ENCODE measurements at regions of chr17 and their contacts with region 1.

Region 1: GRCh38 chr17:35127751-35128514 is 6.5 kb downstream of the FNDC8 start:
- DNase-seq: no peak
- ATAC-seq: no peak
- H3K4me3 ChIP-seq: no peak overlapping the region
- H3K27ac ChIP-seq: no peak overlapping the region
- H3K4me1 ChIP-seq: no peaks in the 10 kb centered on the region
- H3K27me3 ChIP-seq: no peaks in the 10 kb centered on the region
- CTCF ChIP-seq: no peak
- POLR2A ChIP-seq: no peak
- RAD21 ChIP-seq: no peak

Region 2: GRCh38 chr17:35141681-35142466 is 13.9 kb after region 1 on chr17 and contains the start of gene NLE1:
- CTCF ChIA-PET with region 1: no interaction called
- POLR2A ChIA-PET with region 1: no interaction called
- RAD21 ChIA-PET with region 1: no interaction called
- intact Hi-C with region 1: loop called (anchors 1 kb)
- DNase-seq: peak; percentile 71
- ATAC-seq: peak; percentile 93
- H3K4me3 ChIP-seq: peak within 1 kb of the TSS; percentile 97 to 99
- H3K27ac ChIP-seq: peak within 1 kb of the TSS; percentile 70
- H3K4me1 ChIP-seq: peaks cover 3 to 10% of the 10 kb centered on the region in 2 experiments; a peak in 3 of 4 replicates
- H3K27me3 ChIP-seq: no peaks in the 10 kb centered on the region
- CTCF ChIP-seq: peak; percentile 63 to 83 (median 83)
- POLR2A ChIP-seq: no peak
- RAD21 ChIP-seq: peak; percentile 41
- total RNA-seq, gene NLE1: 55.5 TPM

Region 3: DNA sequence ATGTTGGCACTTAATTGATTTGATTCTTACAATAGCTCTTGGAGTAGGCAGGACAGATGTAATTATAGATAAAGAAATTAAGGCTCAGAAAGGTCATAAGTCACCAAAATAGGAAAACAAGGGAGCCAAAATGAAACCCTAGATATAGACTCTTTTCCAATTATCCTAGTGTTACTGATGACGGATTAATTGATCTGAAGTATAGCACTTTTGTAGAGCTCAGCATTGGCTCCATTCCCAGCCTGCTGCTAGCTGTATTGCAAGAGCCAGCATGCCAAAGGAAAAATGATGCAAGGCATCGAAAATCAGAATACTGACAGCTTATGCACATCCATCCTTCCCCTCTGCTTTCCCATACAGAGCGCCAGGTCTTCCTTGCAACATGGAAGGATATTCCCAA is 581.9 kb after region 1 on chr17:
- CTCF ChIA-PET with region 1: no interaction called
- POLR2A ChIA-PET with region 1: no interaction called
- RAD21 ChIA-PET with region 1: no interaction called
- intact Hi-C with region 1: no loop called
- DNase-seq: peak; percentile 7
- ATAC-seq: no peak
- H3K4me3 ChIP-seq: no peak overlapping the region
- H3K27ac ChIP-seq: no peak overlapping the region
- H3K4me1 ChIP-seq: no peaks in the 10 kb centered on the region
- H3K27me3 ChIP-seq: no peaks in the 10 kb centered on the region
- CTCF ChIP-seq: no peak
- POLR2A ChIP-seq: no peak
- RAD21 ChIP-seq: no peak